ENCODE measurements at regions of chr19 and their contacts with region 1.

Region 1: DNA sequence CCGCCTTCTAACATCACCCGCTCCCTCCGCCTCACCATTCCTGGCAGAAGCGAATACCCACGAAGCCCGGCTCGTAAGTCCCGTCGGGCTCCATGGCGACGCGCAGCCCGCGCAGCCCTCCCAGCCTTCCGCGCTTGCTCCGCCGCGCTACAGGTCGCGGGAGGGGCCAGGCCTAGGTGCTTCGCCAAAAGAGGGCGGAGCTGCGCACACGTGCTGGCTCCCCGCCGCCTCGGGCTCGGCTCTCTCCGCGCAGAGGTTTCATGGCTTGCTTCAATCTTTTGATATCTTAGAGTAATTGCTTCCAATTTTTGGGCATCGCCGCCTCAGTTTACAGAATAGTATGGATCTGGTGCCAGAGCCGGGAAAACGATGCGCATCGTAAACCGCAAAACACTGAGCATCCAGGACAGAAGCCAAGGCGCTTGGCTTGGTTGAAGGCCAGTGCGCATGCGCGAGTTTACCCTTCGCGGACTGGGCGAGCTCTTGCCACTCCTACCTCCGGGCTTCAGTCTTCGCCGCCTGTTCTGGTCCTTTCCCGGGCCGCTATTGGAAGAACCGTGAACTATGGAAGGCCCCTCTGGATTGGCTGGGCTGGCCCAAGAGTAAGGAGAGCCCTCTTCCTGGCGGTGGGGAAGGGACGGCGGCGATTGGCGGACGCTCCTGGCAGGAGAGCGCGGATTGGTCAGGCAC is at the start of gene POLR2I:
- DNase-seq: peak; percentile 98 to 100
- ATAC-seq: peak; percentile 93 to 98 (median 96)
- H3K4me3 ChIP-seq: peak within 1 kb of the TSS; percentile 71 to 90 (median 78)
- H3K27ac ChIP-seq: peak within 1 kb of the TSS; percentile 41 to 93 (median 89)
- H3K4me1 ChIP-seq: peaks cover 7 to 30% (median 24%) of the 10 kb centered on the region in 9 donors
- H3K27me3 ChIP-seq: no peaks in the 10 kb centered on the region
- CTCF ChIP-seq: no peak
- total RNA-seq, gene POLR2I: 83.7 to 139 (median 105) TPM

Region 2: GRCh38 chr19:36132489-36132891 is 17.6 kb after region 1 on chr19:
- intact Hi-C with region 1: no loop called
- DNase-seq: no peak
- ATAC-seq: no peak
- H3K4me3 ChIP-seq: no peak overlapping the region
- H3K27ac ChIP-seq: peak overlapping the region in 1 of 10 donors; percentile 59
- H3K4me1 ChIP-seq: peaks cover 0 to 52% (median 19%) of the 10 kb centered on the region in 9 donors
- H3K27me3 ChIP-seq: no peaks in the 10 kb centered on the region
- CTCF ChIP-seq: no peak

Region 3: GRCh38 chr19:36214386-36215275 is 99.7 kb after region 1 on chr19 and contains the starts of genes ZNF146 and ZNF565:
- intact Hi-C with region 1: loop called in 1 of 10 experiments (anchors 1 kb)
- DNase-seq: peak; percentile 98
- ATAC-seq: peak; percentile 96 to 98 (median 97)
- H3K4me3 ChIP-seq: peak within 1 kb of the TSS; percentile 58 to 85 (median 76)
- H3K27ac ChIP-seq: peak within 1 kb of the TSS; percentile 88 to 96 (median 92)
- H3K4me1 ChIP-seq: peaks cover 0 to 44% (median 18%) of the 10 kb centered on the region in 9 donors
- H3K27me3 ChIP-seq: no peaks in the 10 kb centered on the region
- CTCF ChIP-seq: peak in 1 of 9 donors; percentile 8
- total RNA-seq, gene ZNF146: 25.7 to 42.1 (median 32.6) TPM
- total RNA-seq, gene ZNF565: 2.6 to 5.1 (median 3.6) TPM